AG04450 (cell line): ENCODE measurements at regions of chr11 and their contacts with region 1.

Region 1: DNA sequence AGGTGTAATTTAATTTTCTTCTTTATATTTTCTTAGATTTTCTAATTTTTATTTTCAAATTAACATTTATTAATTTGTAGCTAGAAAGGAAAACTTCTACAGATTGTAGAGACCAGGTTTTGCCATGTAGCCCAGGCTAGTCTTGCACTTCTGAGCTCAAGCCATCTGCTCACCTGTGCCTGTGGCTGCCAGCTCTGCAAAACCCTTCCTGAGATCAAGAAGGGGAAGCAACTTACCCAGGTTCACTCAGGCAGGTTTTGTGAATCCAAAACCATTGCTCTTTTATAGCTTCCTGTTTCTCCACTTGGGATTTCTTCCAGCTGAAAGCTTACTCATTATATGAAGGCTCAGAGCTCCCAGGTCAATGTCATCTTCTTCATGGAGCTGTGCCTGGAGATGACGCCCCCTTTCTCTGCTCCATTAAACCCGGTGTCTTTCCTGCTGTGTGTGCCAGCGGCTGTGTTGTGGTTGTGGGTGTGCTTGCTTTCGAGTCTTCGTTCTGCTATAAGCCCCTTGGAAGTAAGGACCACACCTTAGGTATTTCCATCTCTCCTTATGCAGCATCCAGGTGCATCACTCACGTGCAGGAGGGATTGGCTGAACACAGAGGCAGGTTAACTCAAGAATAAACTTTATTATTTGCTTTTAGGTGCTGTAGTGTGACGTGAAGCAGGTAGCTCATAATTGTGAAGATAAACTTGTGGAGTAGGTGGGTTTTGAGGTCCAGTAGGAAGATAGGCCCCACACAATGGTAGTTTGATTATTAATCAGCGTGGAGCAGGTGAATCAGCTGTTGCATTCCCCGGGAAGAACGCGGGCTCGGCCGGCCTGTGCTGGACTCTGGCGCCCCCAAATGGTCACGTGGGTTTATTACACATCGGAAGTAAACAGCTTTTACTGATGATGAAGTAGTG is 42.2 kb upstream of the INCENP start:
- DNase-seq: peak; percentile 16
- H3K4me3 ChIP-seq: peak overlapping the region; percentile 27; the same call in 1 of the 2 replicates
- H3K27ac ChIP-seq: no peak overlapping the region
- H3K27me3 ChIP-seq: no peaks in the 10 kb centered on the region
- CTCF ChIP-seq: peak; percentile 88

Region 2: DNA sequence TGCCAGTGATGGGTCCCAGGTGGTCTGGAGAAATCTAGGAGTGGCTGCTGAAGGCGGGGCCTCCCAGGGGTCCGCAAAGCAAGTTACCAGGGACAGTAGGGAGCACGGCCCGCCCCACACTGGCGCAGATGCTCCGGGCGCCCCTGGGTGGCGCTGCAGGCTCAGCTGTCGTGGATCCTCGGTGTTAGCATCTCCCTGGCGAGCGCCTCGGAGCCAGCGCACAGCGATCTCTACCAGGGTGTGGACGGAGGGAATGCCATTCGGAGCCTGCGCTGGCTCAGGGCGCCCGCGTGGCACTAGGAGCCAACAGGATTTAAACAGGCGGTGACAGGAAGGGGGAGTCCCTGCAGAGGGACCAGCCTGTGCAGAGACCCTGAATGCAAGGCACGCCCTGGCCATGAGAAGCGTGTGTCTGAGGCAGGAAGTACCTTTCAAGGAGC is 210.5 kb before region 1 on chr11:
- CTCF ChIA-PET with region 1: interaction called, 46 read pairs
- POLR2A ChIA-PET with region 1: no interaction called
- DNase-seq: peak; percentile 36
- H3K4me3 ChIP-seq: peak overlapping the region; percentile 43
- H3K27ac ChIP-seq: no peak overlapping the region
- H3K27me3 ChIP-seq: peaks cover 2% of the 10 kb centered on the region
- CTCF ChIP-seq: peak; percentile 91

Region 3: DNA sequence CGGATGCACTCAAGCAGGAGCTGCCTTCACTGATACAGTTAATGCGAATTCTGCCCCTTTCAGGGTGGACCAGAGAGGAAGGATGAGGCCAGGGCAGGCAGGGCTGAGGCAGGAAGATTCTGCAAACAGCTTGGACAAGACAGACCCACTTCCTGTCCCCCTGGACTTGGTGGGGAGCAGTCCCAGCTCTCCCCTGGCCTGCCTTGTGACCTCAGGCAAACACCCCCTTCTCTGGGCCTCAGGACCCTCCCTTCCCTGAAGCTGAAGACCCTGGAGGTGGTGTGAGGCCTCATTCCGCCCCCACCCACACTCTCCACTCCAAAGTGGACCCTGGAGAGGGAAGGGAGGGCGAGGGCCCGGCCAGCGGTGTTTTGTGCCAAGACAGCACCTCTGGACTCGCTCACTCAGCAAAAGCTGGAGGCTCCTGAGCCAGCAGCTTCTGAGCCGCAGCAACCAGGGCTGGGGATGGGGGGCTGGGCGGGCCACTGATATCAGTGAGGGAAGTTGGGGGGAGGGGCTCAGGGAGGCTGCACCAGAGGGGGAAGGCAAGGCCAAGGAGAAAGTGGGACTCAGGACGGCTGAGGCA is 172.8 kb before region 1 on chr11:
- CTCF ChIA-PET with region 1: interaction called, 10 read pairs
- POLR2A ChIA-PET with region 1: no interaction called
- DNase-seq: no peak
- H3K4me3 ChIP-seq: no peak overlapping the region
- H3K27ac ChIP-seq: no peak overlapping the region
- H3K27me3 ChIP-seq: peaks cover 2% of the 10 kb centered on the region
- CTCF ChIP-seq: no peak

Region 4: GRCh38 chr11:61947486-61948210 is 134.0 kb before region 1 on chr11:
- CTCF ChIA-PET with region 1: interaction called, 177 read pairs
- POLR2A ChIA-PET with region 1: interaction called, 5 read pairs
- DNase-seq: no peak
- H3K4me3 ChIP-seq: no peak overlapping the region
- H3K27ac ChIP-seq: no peak overlapping the region
- H3K27me3 ChIP-seq: peaks cover 13% of the 10 kb centered on the region
- CTCF ChIP-seq: peak; percentile 99

Region 5: GRCh38 chr11:61978703-61979661 is 102.7 kb before region 1 on chr11:
- CTCF ChIA-PET with region 1: interaction called, 14 read pairs
- POLR2A ChIA-PET with region 1: no interaction called
- DNase-seq: no peak
- H3K4me3 ChIP-seq: no peak overlapping the region
- H3K27ac ChIP-seq: peak overlapping the region; percentile 70
- H3K27me3 ChIP-seq: no peaks in the 10 kb centered on the region
- CTCF ChIP-seq: no peak

Region 6: GRCh38 chr11:62169091-62169847 is 87.6 kb after region 1 on chr11:
- CTCF ChIA-PET with region 1: no interaction called
- POLR2A ChIA-PET with region 1: no interaction called
- DNase-seq: no peak
- H3K4me3 ChIP-seq: no peak overlapping the region
- H3K27ac ChIP-seq: no peak overlapping the region
- H3K27me3 ChIP-seq: peaks cover 29% of the 10 kb centered on the region
- CTCF ChIP-seq: no peak

Region 7: DNA sequence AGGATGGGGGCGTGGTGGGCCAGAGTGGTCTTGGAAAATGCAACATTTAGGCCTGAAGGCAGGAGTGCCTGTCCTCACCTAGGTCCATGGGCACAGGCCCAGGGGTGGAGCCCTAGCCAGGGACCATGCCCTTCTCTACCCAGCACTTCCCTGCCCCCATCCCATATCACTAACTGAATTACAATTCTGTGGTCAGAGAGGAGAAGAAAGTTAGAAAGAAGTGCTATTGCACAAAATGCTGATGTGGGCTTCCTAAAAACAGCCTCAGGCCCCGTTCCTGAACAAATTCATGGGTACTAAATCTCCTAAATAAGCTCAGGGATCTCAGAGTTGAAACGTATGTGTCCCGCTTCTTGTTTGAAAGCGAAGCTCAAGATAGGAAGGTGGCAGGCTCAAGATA is 252.1 kb after region 1 on chr11:
- CTCF ChIA-PET with region 1: no interaction called
- POLR2A ChIA-PET with region 1: no interaction called
- DNase-seq: no peak
- H3K4me3 ChIP-seq: no peak overlapping the region
- H3K27ac ChIP-seq: no peak overlapping the region
- H3K27me3 ChIP-seq: peaks cover 38% of the 10 kb centered on the region
- CTCF ChIP-seq: no peak